BJ (cell line): ENCODE measurements at regions of chr6 and their contacts with region 1.

Region 1: GRCh38 chr6:35583893-35584688 is 71.4 kb upstream of the TULP1 start:
- DNase-seq: no peak
- H3K4me3 ChIP-seq: no peak overlapping the region
- H3K27me3 ChIP-seq: no peaks in the 10 kb centered on the region
- CTCF ChIP-seq: peak; percentile 81

Region 2: GRCh38 chr6:35425284-35425683 is 158.8 kb before region 1 on chr6:
- CTCF ChIA-PET with region 1: no interaction called
- POLR2A ChIA-PET with region 1: no interaction called
- DNase-seq: peak; percentile 85
- H3K4me3 ChIP-seq: no peak overlapping the region
- H3K27me3 ChIP-seq: no peaks in the 10 kb centered on the region
- CTCF ChIP-seq: no peak

Region 3: GRCh38 chr6:35687658-35688580 is 103.8 kb after region 1 on chr6:
- CTCF ChIA-PET with region 1: interaction called, 18 read pairs
- POLR2A ChIA-PET with region 1: no interaction called
- DNase-seq: no peak
- H3K4me3 ChIP-seq: peak overlapping the region; percentile 63
- H3K27me3 ChIP-seq: no peaks in the 10 kb centered on the region
- CTCF ChIP-seq: no peak

Region 4: GRCh38 chr6:35765739-35766138 is 181.6 kb after region 1 on chr6:
- CTCF ChIA-PET with region 1: no interaction called
- POLR2A ChIA-PET with region 1: no interaction called
- DNase-seq: no peak
- H3K4me3 ChIP-seq: no peak overlapping the region
- H3K27me3 ChIP-seq: peaks cover 14% of the 10 kb centered on the region
- CTCF ChIP-seq: no peak